ENCODE measurements at regions of chr19 and their contacts with region 1.

Region 1: GRCh38 chr19:23686621-23687423 is at the start of gene ZNF675:
- DNase-seq: peak; percentile 90
- H3K4me3 ChIP-seq: peak within 1 kb of the TSS; percentile 70 to 99 (median 88)
- H3K27ac ChIP-seq: peak within 1 kb of the TSS; percentile 90
- H3K4me1 ChIP-seq: no peaks in the 10 kb centered on the region
- H3K27me3 ChIP-seq: no peaks in the 10 kb centered on the region
- CTCF ChIP-seq: peak in 1 of 2 donors; percentile 27
- total RNA-seq, gene ZNF675: 16.4 to 22.3 TPM

Region 2: DNA sequence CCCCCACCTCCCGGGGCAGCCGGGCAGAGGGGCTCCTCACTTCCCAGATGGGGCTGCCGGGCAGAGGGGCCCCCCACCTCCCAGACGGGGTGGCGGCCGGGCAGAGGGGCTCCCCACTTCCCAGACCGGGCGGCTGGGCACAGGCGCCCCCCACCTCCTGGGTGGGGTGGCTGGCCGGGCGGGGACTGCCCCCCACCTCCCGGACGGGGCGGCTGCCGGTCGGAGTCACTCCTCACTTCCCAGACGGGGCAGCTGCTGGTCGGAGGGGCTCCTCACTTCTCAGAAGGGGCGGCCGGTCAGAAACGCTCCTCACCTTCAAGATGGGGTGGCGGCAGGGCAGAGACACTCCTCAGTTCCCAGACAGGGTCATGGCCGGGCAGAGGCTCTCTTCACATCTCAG is 526.1 kb before region 1 on chr19:
- CTCF ChIA-PET with region 1: no interaction called
- dilution Hi-C with region 1: no loop called
- in situ Hi-C with region 1: no loop called
- intact Hi-C with region 1: no loop called
- DNase-seq: no peak
- H3K4me3 ChIP-seq: no peak overlapping the region
- H3K27ac ChIP-seq: no peak overlapping the region
- H3K4me1 ChIP-seq: no peaks in the 10 kb centered on the region
- H3K27me3 ChIP-seq: no peaks in the 10 kb centered on the region
- CTCF ChIP-seq: no peak

Region 3: GRCh38 chr19:23395041-23395721 is 291.6 kb before region 1 on chr19 and contains the start of gene ZNF91:
- CTCF ChIA-PET with region 1: no interaction called
- dilution Hi-C with region 1: no loop called
- in situ Hi-C with region 1: no loop called
- intact Hi-C with region 1: loop called (anchors 5 kb)
- DNase-seq: peak; percentile 97
- H3K4me3 ChIP-seq: peak within 1 kb of the TSS; percentile 69 to 75 (median 75)
- H3K27ac ChIP-seq: peak within 1 kb of the TSS; percentile 82
- H3K4me1 ChIP-seq: no peaks in the 10 kb centered on the region
- H3K27me3 ChIP-seq: no peaks in the 10 kb centered on the region
- CTCF ChIP-seq: no peak
- total RNA-seq, gene ZNF91: 27.8 to 43.7 TPM

Region 4: DNA sequence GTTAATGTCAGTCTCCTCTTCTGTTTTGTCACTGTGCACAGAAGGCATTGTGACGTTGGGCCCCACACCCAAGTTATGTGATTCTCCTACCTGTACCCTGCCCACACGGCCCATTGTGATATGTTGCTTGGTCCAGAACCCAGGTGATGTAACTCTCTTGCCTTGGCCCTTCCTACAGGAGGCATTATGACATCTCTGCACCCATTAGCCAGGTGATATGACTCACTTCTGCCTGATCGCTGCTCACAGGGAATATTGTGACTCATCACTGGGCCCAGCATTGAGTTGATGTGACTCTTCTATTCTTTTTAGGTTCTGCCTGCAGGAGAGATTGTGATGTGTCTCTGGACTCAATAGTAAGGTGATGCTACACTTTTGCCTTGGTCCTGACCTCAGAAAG is 226.2 kb before region 1 on chr19:
- CTCF ChIA-PET with region 1: no interaction called
- dilution Hi-C with region 1: no loop called
- in situ Hi-C with region 1: no loop called
- intact Hi-C with region 1: loop called (anchors 5 kb)
- DNase-seq: peak; percentile 90
- H3K4me3 ChIP-seq: no peak overlapping the region
- H3K27ac ChIP-seq: no peak overlapping the region
- H3K4me1 ChIP-seq: peaks cover 4% of the 10 kb centered on the region
- H3K27me3 ChIP-seq: no peaks in the 10 kb centered on the region
- CTCF ChIP-seq: no peak

Region 5: GRCh38 chr19:23549141-23549711 is 137.6 kb before region 1 on chr19:
- CTCF ChIA-PET with region 1: no interaction called
- dilution Hi-C with region 1: no loop called
- in situ Hi-C with region 1: no loop called
- intact Hi-C with region 1: loop called (anchors 2 kb)
- DNase-seq: peak; percentile 72
- H3K4me3 ChIP-seq: no peak overlapping the region
- H3K27ac ChIP-seq: peak overlapping the region; percentile 94
- H3K4me1 ChIP-seq: peaks cover 30% of the 10 kb centered on the region
- H3K27me3 ChIP-seq: no peaks in the 10 kb centered on the region
- CTCF ChIP-seq: no peak

Region 6: DNA sequence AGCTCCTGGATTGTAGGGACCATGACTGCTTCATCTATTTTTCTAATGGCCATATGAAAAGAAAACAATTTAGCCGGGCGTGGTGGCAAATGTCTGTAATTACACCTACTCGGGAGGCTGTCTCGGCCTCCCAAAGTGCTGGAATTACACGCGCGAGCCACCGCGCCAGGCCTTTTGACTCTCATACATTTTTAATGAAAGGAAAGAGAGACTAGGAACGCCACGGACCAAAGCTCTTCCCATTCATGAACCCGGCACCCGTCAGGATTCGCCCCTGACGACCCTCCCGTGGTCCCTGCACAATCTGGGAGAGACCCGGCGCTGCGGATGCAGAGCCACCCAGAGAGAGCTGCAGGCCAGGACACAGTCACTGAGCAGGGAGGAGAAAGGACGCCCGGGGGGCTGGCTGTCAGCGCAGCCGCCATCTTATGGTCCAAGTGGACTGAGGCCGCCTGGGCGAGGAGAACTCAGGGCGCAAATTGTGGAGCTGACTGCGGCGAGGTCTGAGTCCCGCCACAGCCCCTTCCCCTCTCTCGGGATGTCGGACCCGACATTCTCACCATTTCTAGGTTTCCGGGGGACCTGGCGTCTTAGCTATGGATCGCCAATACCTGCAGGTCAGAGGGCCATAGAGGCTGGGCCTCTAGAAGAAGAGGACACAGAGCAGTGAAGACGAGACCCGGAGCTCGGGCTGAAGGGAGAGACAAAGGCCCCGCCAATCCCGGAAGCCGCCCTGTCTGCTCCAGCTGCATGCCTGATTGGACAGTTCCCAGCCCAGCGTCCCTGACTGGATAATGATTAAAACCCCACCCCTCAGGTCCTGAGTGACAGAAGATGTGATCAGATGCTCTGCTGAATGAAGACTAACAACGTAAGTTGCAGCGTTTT is 71.6 kb after region 1 on chr19 and contains the start of gene ZNF681:
- CTCF ChIA-PET with region 1: no interaction called
- dilution Hi-C with region 1: no loop called
- in situ Hi-C with region 1: no loop called
- intact Hi-C with region 1: loop called (anchors 2 kb)
- DNase-seq: peak; percentile 85
- H3K4me3 ChIP-seq: peak within 1 kb of the TSS; percentile 47 to 61 (median 55)
- H3K27ac ChIP-seq: peak within 1 kb of the TSS; percentile 7
- H3K4me1 ChIP-seq: no peaks in the 10 kb centered on the region
- H3K27me3 ChIP-seq: no peaks in the 10 kb centered on the region
- CTCF ChIP-seq: peak in 1 of 2 donors; percentile 13
- total RNA-seq, gene ZNF681: 1.3 to 2.3 TPM

Region 7: DNA sequence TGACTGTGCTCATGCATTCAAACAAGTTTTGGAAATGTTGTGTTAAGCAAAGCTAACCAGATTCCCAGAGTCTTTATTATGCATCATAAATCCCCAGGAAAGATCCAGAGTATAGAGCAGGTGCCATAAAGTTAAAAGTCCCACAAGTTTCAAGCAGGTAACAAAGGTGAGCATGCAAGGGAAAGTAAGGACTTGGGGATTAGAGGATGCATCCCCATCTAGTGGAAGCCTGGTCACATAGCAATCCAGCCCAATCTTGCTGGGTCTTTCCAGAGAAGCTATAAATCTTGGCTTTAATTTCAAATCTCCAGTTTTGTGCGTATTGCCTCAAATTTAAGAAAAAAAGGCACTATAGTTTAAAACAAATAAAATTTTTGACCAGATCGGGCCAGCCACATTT is 472.9 kb after region 1 on chr19:
- CTCF ChIA-PET with region 1: no interaction called
- dilution Hi-C with region 1: no loop called
- in situ Hi-C with region 1: no loop called
- intact Hi-C with region 1: loop called (anchors 10 kb)
- DNase-seq: peak; percentile 29
- H3K4me3 ChIP-seq: no peak overlapping the region
- H3K27ac ChIP-seq: no peak overlapping the region
- H3K4me1 ChIP-seq: no peaks in the 10 kb centered on the region
- H3K27me3 ChIP-seq: no peaks in the 10 kb centered on the region
- CTCF ChIP-seq: peak; percentile 37 to 76